Activated CD4-positive, alpha-beta T cell treated with anti-CD3 and anti-CD28 coated beads for 36 hours (primary cell): ENCODE measurements at regions of chr14 and their contacts with region 1.

Region 1: DNA sequence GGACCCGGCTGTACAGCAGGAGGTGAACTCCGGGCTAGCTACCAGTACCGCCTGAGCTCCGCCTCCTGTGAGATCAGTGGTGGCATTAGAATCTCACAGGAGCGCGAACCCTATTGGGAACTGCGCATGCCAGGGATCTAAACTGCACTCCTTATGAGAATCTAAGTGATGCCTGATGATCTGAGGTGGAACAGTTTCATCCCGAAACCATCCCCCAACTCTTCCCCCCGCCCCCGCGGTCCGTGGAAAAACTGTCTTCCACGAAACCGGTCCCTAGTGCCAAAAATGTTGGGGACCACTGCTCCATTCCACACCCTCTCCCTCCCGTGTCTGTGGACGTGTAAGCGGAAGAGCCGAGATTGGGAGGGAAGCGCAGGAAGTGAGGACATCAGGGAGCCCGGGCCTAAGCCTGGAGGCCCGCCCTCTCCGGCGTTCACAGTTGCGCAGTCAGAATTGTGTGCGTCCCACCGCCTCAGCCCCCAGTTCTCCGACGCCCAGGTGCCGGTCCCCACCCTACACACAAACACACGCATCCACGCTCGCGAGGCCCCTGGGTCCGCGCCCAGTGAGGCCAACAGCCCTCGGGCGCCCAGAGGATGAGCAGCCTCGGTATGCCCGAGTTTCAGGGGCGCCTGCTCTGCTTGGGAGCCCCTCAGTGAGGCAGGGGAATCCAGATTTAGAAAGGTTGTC is 1.8 kb upstream of the RNASE4 start:
- DNase-seq: peak; percentile 88
- ATAC-seq: peak; percentile 68
- H3K4me3 Mint-ChIP-seq: no peak overlapping the region
- H3K27ac Mint-ChIP-seq: no peak overlapping the region
- H3K4me1 Mint-ChIP-seq: peaks cover 30% of the 10 kb centered on the region
- H3K27me3 Mint-ChIP-seq: no peaks in the 10 kb centered on the region

Region 2: DNA sequence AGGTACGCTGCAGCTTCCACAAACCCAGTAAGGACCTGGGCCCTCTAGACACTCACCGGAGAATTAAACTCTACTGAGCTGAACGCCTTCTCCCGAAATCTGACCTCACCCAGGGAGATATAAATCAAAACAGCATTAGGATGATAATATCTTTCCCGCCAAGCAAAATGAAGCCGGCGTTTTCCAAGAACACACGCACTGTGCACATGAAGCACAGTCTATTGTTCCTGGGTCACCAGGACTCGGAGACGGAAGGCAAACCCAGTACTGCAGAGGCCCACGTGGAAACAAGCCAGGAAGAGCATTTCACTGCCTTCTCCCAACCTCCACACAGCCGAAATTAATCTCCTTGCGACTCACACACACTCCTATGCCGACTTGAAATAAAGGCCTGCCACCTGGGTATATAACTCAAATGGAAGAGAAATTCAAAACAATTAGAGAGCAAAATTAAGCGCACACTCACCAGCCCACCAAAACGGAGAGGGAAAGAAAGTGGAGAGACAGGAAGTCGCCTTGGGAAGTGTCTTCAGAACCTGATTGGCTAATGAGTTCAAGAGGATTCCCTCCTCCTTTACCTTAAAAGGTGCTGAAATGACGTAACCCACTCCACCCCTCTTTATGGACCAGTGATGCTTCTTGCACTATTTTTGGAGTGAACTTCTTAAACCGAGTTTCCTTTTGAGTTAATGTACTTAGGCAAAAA is 349.6 kb before region 1 on chr14 and contains the start of gene CCNB1IP1:
- CTCF ChIA-PET with region 1: interaction called, 10 read pairs
- POLR2A ChIA-PET with region 1: no interaction called
- intact Hi-C with region 1: loop called in 1 of 2 experiments (anchors 2 kb)
- DNase-seq: peak; percentile 59
- ATAC-seq: peak; percentile 99
- H3K4me3 Mint-ChIP-seq: peak within 1 kb of the TSS; percentile 98
- H3K27ac Mint-ChIP-seq: peak within 1 kb of the TSS; percentile 95
- H3K4me1 Mint-ChIP-seq: peaks cover 35% of the 10 kb centered on the region
- H3K27me3 Mint-ChIP-seq: no peaks in the 10 kb centered on the region
- total RNA-seq, gene CCNB1IP1: 57.4 to 67.0 TPM

Region 3: GRCh38 chr14:20454516-20455354 is 227.8 kb before region 1 on chr14 and contains the starts of genes APEX1 and OSGEP:
- CTCF ChIA-PET with region 1: no interaction called
- POLR2A ChIA-PET with region 1: no interaction called
- intact Hi-C with region 1: loop called (anchors 1 to 2 kb)
- DNase-seq: peak; percentile 99
- ATAC-seq: peak; percentile 89
- H3K4me3 Mint-ChIP-seq: no peak within 1 kb of the TSS
- H3K27ac Mint-ChIP-seq: no peak within 1 kb of the TSS
- H3K4me1 Mint-ChIP-seq: peaks cover 18% of the 10 kb centered on the region
- H3K27me3 Mint-ChIP-seq: no peaks in the 10 kb centered on the region
- total RNA-seq, gene APEX1: 216 to 257 TPM
- total RNA-seq, gene OSGEP: 46.2 to 47.5 TPM

Region 4: DNA sequence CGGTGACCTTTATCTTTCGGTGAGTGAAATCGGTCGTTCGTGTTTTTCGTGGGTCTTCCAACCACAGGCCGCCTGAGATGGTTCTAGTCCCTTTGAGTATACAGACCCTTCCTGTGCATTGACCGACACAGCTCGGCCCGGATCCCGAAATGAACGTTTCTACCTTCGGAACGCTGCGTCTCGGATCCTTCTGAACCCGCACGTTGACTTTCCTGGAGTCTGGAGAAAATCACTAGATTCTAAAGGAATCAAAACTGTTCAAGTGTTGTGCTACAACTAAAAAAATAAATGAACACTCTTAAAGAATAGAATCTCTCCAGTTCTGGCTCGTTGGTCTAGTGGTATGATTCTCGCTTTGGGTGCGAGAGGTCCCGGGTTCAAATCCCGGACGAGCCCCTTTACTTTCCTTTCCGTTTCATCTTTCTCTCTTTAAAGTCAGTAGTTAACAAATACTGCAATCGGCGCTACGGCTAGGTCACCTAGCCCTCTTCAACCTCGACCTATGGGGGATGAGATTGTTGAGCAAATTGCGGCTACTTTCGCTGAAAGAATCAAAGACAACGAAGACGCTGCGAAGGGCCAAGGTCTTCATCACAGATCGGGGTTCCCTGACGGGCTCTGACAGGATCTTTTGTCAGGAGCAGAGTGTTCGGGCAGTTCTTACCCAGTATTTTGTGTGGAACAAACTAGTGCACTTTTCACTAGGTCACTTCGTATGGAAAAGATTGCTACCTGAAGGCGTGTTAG is 49.7 kb before region 1 on chr14:
- CTCF ChIA-PET with region 1: interaction called, 34 read pairs
- POLR2A ChIA-PET with region 1: interaction called, 7 read pairs
- intact Hi-C with region 1: loop called (anchors 1 kb)
- DNase-seq: peak; percentile 88
- ATAC-seq: peak; percentile 85
- H3K4me3 Mint-ChIP-seq: peak overlapping the region; percentile 75
- H3K27ac Mint-ChIP-seq: peak overlapping the region; percentile 43
- H3K4me1 Mint-ChIP-seq: peaks cover 45% of the 10 kb centered on the region
- H3K27me3 Mint-ChIP-seq: peaks cover 10% of the 10 kb centered on the region

Region 5: GRCh38 chr14:20956376-20956976 is 273.9 kb after region 1 on chr14:
- CTCF ChIA-PET with region 1: interaction called, 3 read pairs
- POLR2A ChIA-PET with region 1: no interaction called
- intact Hi-C with region 1: loop called in 1 of 2 experiments (anchors 5 kb)
- DNase-seq: no peak
- ATAC-seq: no peak
- H3K4me3 Mint-ChIP-seq: no peak overlapping the region
- H3K27ac Mint-ChIP-seq: no peak overlapping the region
- H3K4me1 Mint-ChIP-seq: peaks cover 27% of the 10 kb centered on the region
- H3K27me3 Mint-ChIP-seq: peaks cover 8% of the 10 kb centered on the region